K562 (cell line): ENCODE measurements at regions of chr1 and their contacts with region 1.

Region 1: GRCh38 chr1:31394628-31395193 is 18.3 kb upstream of the SERINC2 start:
- DNase-seq: peak; percentile 86 to 88 (median 87)
- ATAC-seq: peak; percentile 97
- H3K4me3 ChIP-seq: peak overlapping the region; percentile 33
- H3K27ac ChIP-seq: no peak overlapping the region
- H3K4me1 ChIP-seq: peaks cover 8 to 12% of the 10 kb centered on the region in 2 experiments; a peak in 4 of 5 replicates
- H3K27me3 ChIP-seq: peaks cover 2 to 16% of the 10 kb centered on the region in 2 experiments; a peak in 3 of 5 replicates
- CTCF ChIP-seq: peak; percentile 86 to 92 (median 92)
- EP300 ChIP-seq: no peak
- POLR2A ChIP-seq: no peak
- RAD21 ChIP-seq: peak; percentile 82 to 89

Region 2: DNA sequence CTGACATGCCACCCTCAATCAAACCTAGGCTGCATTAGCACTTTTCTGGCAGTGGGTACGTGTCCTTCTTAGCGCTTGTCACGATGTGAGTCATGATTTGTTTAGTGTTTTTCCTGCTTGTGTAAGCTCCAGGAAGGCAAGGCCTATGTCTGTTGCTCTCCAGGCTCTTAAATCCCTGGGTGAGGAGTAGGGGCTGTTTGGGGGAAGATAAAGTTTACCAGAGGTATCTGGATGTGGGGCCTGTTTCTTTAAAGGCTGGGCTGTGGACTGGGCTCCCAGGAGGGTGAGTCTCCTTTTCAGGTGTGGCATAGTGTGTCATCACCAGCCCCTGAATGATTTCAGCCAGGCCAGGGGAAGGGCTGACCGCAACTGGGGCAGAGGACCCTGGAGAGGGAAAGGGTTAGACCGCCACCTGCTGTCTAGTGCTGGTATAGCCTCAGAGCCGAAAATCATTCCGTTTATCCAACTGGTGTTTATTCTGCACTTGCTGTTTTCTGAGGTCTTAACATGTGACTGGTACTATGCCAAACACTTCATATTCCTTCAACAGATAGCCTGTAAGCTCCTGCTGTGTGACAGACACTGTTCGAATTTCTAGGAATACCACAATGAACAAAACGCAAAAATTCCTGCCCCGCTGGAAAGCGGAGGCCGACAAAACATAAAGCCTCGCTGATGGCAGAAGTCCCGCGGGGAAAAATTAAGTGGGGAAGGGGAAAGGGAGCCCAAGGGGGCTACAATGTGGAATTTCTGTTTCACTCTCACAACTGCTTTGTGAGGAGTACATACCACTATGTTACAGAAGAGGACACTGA is 28.0 kb after region 1 on chr1:
- CTCF ChIA-PET with region 1: interaction called, 52 read pairs
- POLR2A ChIA-PET with region 1: interaction called, 4 read pairs
- in situ Hi-C with region 1: no loop called
- intact Hi-C with region 1: loop called (anchors 1 kb)
- DNase-seq: peak; percentile 82 to 87 (median 83)
- ATAC-seq: peak; percentile 90
- H3K4me3 ChIP-seq: no peak overlapping the region
- H3K27ac ChIP-seq: no peak overlapping the region
- H3K4me1 ChIP-seq: peaks cover 0 to 12% of the 10 kb centered on the region in 2 experiments; a peak in 1 of 5 replicates
- H3K27me3 ChIP-seq: peaks cover 6 to 38% of the 10 kb centered on the region in 2 experiments; a peak in 3 of 5 replicates
- CTCF ChIP-seq: peak; percentile 92 to 99 (median 99)
- EP300 ChIP-seq: no peak
- POLR2A ChIP-seq: no peak
- RAD21 ChIP-seq: peak; percentile 97 to 98

Region 3: GRCh38 chr1:31880890-31881687 is 486.4 kb after region 1 on chr1:
- CTCF ChIA-PET with region 1: no interaction called
- POLR2A ChIA-PET with region 1: no interaction called
- in situ Hi-C with region 1: no loop called
- intact Hi-C with region 1: no loop called
- DNase-seq: no peak
- ATAC-seq: peak; percentile 42
- H3K4me3 ChIP-seq: no peak overlapping the region
- H3K27ac ChIP-seq: no peak overlapping the region
- H3K4me1 ChIP-seq: peaks cover 6 to 29% of the 10 kb centered on the region in 2 experiments
- H3K27me3 ChIP-seq: no peaks in the 10 kb centered on the region
- CTCF ChIP-seq: no peak
- EP300 ChIP-seq: no peak
- POLR2A ChIP-seq: no peak
- RAD21 ChIP-seq: no peak